OCI-LY7 (cell line): ENCODE measurements at regions of chr15 and their contacts with region 1.

Region 1: GRCh38 chr15:92924216-92924615 is 24.1 kb downstream of the CHD2 start:
- DNase-seq: no peak
- H3K4me3 ChIP-seq: no peak overlapping the region
- H3K27ac ChIP-seq: no peak overlapping the region
- H3K4me1 ChIP-seq: peaks cover 37% of the 10 kb centered on the region
- CTCF ChIP-seq: no peak

Region 2: DNA sequence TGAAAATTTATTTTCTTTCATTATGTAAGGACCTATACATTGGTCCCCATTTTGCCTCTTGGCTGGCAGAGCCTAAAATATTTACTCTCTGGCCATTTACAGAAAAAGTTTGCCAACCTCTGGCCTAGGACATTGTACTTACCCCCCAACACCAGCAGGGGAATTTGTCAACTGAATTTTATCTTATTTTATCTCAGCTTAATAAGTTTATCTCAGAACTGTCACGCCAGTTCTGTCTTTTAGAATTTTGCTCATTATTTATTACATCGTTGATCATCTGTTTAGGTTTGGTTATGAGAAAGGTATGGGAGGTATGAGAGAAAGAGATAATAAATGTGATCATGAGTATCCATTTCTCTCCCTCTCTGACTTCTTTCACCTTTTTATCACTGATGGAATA is 14.2 kb after region 1 on chr15:
- CTCF ChIA-PET with region 1: no interaction called
- POLR2A ChIA-PET with region 1: interaction called, 4 read pairs
- intact Hi-C with region 1: loop called (anchors 2 kb)
- DNase-seq: no peak
- H3K4me3 ChIP-seq: no peak overlapping the region
- H3K27ac ChIP-seq: no peak overlapping the region
- H3K4me1 ChIP-seq: no peaks in the 10 kb centered on the region
- CTCF ChIP-seq: peak; percentile 54

Region 3: GRCh38 chr15:93164409-93164808 is 240.2 kb after region 1 on chr15:
- CTCF ChIA-PET with region 1: no interaction called
- POLR2A ChIA-PET with region 1: no interaction called
- intact Hi-C with region 1: no loop called
- DNase-seq: no peak
- H3K4me3 ChIP-seq: no peak overlapping the region
- H3K27ac ChIP-seq: no peak overlapping the region
- H3K4me1 ChIP-seq: no peaks in the 10 kb centered on the region
- CTCF ChIP-seq: no peak